Astrocyte of the cerebellum (primary cell): ENCODE measurements at regions of chr1 and their contacts with region 1.

Region 1: GRCh38 chr1:51916587-51917405 is 38.3 kb upstream of the NRDC start:
- DNase-seq: no peak
- H3K4me3 ChIP-seq: no peak overlapping the region
- CTCF ChIP-seq: no peak

Region 2: DNA sequence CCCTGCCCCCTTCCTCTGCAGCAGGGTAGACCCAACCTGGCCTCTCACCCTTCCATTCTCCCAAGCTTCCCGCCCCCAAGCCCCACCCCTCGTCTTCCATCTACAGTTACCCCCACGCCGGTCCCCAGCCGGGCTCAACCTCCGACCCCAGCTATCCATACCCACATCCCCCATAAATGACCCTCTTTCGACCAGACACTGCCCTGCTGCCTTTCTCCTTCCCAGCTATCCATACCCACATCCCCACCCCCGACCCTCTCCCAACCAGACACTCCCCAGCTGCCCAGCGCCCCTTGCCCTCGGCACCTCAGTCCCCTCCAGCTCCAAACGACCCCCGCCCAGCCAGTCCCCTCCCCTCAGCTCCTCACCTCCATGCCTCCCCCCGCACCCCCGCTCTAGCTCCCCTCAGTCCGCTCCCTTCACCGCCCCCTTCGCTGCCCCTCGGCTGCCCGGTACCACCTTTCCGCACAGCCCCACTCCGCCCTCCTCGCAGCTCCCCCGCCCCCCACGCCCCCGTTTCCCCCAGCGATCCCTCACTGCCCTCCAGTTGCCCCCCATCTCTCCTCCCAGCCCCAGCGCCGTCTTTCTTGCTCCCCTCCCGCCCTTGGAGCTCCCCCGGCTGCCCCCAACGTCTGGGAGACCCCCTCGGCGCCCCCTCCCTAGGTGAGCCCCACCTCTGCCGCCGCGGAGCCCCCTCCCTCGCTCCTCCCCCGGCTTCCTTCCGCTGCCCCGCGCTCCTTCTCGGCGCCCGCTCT is 73.1 kb after region 1 on chr1:
- in situ Hi-C with region 1: loop called (anchors 5 kb)
- DNase-seq: no peak
- H3K4me3 ChIP-seq: peak overlapping the region; percentile 61
- CTCF ChIP-seq: no peak

Region 3: GRCh38 chr1:52041551-52042185 is 124.9 kb after region 1 on chr1:
- in situ Hi-C with region 1: no loop called
- DNase-seq: no peak
- H3K4me3 ChIP-seq: no peak overlapping the region
- CTCF ChIP-seq: no peak